H1 (cell line): ENCODE measurements at regions of chr4 and their contacts with region 1.

Region 1: DNA sequence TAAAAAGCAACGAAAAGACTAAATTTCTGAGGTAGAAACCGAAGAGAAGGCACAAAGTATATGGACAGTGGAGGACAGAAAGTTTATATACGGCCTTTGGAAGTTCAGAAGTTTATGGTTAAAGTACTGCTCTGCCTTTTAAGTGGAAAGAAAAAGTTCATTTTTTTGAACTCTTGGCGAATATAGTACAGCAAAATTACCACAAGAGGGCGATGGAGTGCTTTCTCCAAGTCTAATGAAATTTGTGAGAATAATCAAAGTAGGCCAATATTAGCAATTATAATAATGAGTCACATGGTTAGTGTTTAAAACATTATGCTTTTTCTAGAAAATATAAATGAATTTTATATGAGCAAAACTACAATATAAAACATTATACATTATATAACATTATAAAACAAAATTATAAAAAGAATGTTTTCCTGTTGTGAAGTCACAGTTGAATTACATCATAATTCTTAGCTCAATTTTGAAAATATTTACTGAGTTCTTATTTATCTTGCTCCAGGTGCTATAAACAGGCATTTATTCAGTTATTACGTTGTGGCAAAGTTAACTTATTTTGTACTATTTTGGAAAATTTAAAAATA is 136.2 kb upstream of the BMPR1B start:
- DNase-seq: no peak
- H3K4me3 ChIP-seq: no peak overlapping the region
- H3K27ac ChIP-seq: no peak overlapping the region
- H3K4me1 ChIP-seq: no peaks in the 10 kb centered on the region
- H3K27me3 ChIP-seq: no peaks in the 10 kb centered on the region
- CTCF ChIP-seq: peak in 2 of 3 experiments; percentile 43 to 57; a peak in 2 of 4 replicates
- EP300 ChIP-seq: no peak
- POLR2A ChIP-seq: no peak
- RAD21 ChIP-seq: peak; percentile 74 to 76

Region 2: DNA sequence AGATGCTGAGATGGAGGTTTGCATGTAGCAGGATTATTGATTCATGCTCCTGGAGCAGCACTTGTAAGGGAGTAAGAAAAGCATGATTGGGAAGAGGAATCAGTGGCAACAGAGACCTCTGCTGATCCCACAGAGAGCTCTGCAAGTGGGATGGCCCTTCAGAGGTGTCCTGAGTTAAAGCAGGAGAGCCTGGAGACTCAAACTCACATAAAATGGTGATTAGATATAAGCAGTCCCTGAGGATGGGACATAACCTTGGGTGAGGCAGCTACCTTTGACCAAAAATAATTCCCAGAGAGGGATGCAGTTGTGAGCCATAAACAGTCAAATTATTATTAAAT is 110.7 kb after region 1 on chr4:
- CTCF ChIA-PET with region 1: interaction called, 20 read pairs
- POLR2A ChIA-PET with region 1: no interaction called
- DNase-seq: no peak
- H3K4me3 ChIP-seq: no peak overlapping the region
- H3K27ac ChIP-seq: no peak overlapping the region
- H3K4me1 ChIP-seq: no peaks in the 10 kb centered on the region
- H3K27me3 ChIP-seq: no peaks in the 10 kb centered on the region
- CTCF ChIP-seq: no peak
- EP300 ChIP-seq: no peak
- POLR2A ChIP-seq: no peak
- RAD21 ChIP-seq: no peak

Region 3: DNA sequence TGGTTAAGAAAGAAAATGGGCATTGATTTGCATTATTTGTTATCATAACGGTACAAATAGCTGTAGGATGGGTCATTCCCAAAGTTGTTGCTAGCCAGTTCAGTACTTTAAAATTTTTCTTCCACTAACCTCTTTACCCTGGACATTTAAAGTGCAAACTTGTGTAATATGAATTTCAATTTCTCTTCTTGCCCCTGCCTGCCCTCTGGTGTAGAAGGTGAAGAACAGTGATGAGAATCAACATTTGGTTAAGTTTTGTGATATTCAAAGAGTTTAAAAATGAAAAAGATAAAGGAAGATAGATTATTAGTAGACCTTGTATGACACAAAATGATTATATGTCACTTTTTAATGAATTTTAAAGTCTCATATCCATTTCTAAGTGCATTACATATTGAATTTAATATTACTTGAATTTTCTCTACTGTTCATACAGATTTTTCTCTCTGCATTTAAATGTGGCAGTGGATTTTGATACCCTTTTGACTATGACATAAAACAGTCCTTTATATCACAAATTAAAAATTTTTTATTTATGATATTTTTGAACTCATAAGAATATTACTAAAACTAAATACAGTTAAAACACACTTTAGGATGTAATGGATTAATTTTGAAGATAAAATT is 473.9 kb after region 1 on chr4:
- CTCF ChIA-PET with region 1: interaction called, 14 read pairs
- POLR2A ChIA-PET with region 1: no interaction called
- DNase-seq: no peak
- H3K4me3 ChIP-seq: no peak overlapping the region
- H3K27ac ChIP-seq: no peak overlapping the region
- H3K4me1 ChIP-seq: no peaks in the 10 kb centered on the region
- H3K27me3 ChIP-seq: peaks cover 0 to 1% (median 0%) of the 10 kb centered on the region in 4 experiments; a peak in 1 of 7 replicates
- CTCF ChIP-seq: peak in 2 of 3 experiments; percentile 33 to 45; a peak in 2 of 4 replicates
- EP300 ChIP-seq: no peak
- POLR2A ChIP-seq: no peak
- RAD21 ChIP-seq: peak; percentile 71 to 80

Region 4: DNA sequence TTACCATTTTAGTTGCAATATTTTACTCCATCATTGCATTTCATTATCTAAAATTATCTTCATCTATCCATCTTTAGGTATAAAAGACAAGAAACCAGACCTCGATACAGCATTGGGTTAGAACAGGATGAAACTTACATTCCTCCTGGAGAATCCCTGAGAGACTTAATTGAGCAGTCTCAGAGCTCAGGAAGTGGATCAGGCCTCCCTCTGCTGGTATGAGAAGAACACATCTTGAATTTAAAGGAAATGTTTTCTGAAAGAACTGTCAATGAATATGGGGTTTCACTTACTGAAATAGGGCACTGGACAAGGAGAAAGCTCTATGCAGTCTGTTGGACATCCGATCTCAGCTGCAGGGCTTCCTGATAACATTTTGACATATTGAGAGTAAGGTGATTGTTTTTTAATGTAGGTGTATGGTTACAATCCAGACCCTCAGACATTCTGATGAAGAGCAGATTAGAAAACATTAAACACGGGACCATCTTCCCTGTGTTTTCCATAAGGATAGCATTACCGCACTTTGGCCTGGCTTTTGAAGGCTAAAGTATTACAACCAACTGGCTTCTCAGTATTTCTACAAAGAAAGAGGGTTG is 503.4 kb after region 1 on chr4:
- CTCF ChIA-PET with region 1: interaction called, 13 read pairs
- POLR2A ChIA-PET with region 1: no interaction called
- DNase-seq: peak in 1 of 2 experiments; percentile 9
- H3K4me3 ChIP-seq: no peak overlapping the region
- H3K27ac ChIP-seq: no peak overlapping the region
- H3K4me1 ChIP-seq: no peaks in the 10 kb centered on the region; a peak in 1 of 7 replicates
- H3K27me3 ChIP-seq: no peaks in the 10 kb centered on the region
- CTCF ChIP-seq: peak in 2 of 3 experiments; percentile 58 to 64; a peak in 3 of 4 replicates
- EP300 ChIP-seq: no peak
- POLR2A ChIP-seq: no peak
- RAD21 ChIP-seq: peak; percentile 80 to 82